Dendritic cell treated with granulocyte-macrophage colony-stimulating factor and Interleukin-4, amounts not matched to agents 40 ng/mL and 50 ng/mL, for 4 days (primary cell): ENCODE measurements at regions of chr19 and their contacts with region 1.

Region 1: DNA sequence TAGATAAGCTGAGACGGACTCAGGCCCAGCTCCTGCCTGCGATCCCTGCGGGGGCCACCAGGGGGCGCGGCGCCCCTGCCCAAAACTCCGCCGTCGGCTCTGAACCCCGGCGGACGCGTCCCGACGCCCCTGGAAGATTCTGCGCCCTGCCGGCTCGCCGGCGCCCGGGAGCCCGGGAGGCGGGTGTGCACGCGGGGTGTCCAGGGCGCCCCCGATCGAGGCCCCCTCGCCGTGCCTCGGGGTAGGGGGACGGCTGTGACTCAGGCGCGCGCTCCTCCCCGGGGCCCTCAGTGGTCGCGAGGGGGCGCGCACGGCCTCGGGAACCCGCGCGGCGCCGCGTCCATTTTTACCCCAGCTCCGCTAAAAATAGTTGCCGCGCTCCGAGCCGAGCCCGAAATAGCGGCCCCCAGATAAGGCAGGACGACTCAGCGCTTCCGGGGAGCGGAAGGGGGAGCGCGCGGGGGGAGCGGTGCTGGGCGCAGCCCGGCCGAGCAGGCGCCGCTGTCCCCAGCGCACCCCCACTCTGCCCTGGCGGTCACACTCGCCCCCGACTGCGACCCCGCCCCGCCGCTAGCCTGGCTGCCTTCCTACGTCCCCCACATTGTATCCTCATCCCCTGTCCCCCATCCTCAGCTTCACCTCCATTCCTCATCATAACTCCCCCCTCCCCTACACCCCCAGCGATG is 16.0 kb upstream of the ERCC1 start:
- H3K4me3 Mint-ChIP-seq: peak overlapping the region; percentile 71
- H3K27ac Mint-ChIP-seq: peak overlapping the region; percentile 76
- H3K4me1 Mint-ChIP-seq: peaks cover 43% of the 10 kb centered on the region
- H3K27me3 Mint-ChIP-seq: peaks cover 4% of the 10 kb centered on the region

Region 2: DNA sequence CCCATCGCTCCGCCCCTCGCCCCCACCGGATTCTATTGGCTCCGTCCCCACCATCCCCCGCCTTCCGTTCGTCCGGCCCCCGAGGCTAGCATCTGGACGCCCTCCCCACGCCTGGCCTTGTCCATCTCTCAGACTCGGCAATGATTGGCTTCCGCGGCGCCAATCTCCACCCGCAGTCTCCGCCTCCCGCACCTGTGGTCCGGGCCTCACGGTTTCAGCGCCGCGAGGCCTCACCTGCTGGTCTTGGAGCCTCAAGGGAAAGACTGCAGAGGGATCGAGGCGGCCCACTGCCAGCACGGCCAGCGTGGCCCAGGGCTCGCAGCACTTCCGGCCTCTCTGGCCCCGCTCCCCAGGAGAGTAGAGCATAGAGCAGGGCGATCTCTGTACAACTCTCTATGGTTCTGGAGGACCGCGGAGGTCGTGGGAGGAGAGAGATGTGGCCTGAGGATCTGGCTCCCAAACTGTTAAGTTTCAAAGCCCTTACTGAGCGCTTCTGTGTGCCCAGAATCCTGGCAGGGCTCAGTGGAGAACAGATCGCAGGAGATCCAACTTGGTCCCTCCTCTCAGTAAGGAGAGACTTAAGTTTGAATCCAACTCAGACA is 16.0 kb before region 1 on chr19 and contains the start of gene ERCC1:
- intact Hi-C with region 1: no loop called
- H3K4me3 Mint-ChIP-seq: peak within 1 kb of the TSS; percentile 97
- H3K27ac Mint-ChIP-seq: peak within 1 kb of the TSS; percentile 94
- H3K4me1 Mint-ChIP-seq: peaks cover 73% of the 10 kb centered on the region
- H3K27me3 Mint-ChIP-seq: peaks cover 9% of the 10 kb centered on the region

Region 3: GRCh38 chr19:45455707-45456499 is 16.2 kb after region 1 on chr19:
- intact Hi-C with region 1: loop called (anchors 2 kb)
- H3K4me3 Mint-ChIP-seq: peak overlapping the region; percentile 58
- H3K27ac Mint-ChIP-seq: peak overlapping the region; percentile 95
- H3K4me1 Mint-ChIP-seq: peaks cover 51% of the 10 kb centered on the region
- H3K27me3 Mint-ChIP-seq: peaks cover 20% of the 10 kb centered on the region

Region 4: GRCh38 chr19:45469132-45469944 is 29.6 kb after region 1 on chr19:
- intact Hi-C with region 1: loop called (anchors 2 kb)
- H3K4me3 Mint-ChIP-seq: peak overlapping the region; percentile 93
- H3K27ac Mint-ChIP-seq: peak overlapping the region; percentile 97
- H3K4me1 Mint-ChIP-seq: peaks cover 80% of the 10 kb centered on the region
- H3K27me3 Mint-ChIP-seq: peaks cover 65% of the 10 kb centered on the region

Region 5: DNA sequence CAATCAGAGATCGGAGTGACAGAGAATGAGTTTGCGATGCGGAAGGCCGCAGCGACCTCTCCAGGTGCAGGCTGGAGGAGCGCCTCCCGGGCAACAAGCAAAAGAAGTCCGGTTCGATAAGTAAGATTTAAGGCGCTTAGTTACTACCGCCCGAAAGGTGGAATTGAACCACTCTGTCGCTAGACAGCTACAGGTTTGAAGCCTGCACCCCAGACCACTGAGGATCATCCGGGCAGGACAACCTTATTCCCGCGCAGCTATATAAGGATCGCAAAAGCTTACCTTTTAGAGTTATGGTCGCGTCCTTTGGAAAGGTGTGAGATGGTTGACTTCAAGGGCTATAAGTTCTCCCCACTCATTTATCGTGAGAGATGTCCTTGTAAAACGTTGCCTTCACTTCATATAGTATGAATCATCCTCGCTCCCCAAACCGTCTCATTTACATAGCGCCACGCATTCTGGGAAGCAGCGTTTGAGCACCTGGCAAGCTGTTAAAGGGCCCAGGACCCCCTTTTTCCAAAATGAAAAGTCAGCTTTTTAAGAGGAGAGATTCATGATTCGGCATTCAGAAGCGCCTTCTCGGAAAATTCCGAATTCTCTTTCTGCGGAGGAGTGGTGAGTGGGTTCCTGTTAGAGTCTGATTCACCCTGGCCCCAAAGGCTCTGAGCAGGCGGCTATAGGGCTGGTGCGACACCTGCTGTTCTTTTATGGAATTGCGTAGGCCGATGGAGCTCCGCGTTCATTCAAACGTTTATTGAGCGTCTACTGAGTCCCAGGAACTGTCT is 38.9 kb after region 1 on chr19:
- intact Hi-C with region 1: loop called (anchors 1 kb)
- H3K4me3 Mint-ChIP-seq: peak overlapping the region; percentile 73
- H3K27ac Mint-ChIP-seq: peak overlapping the region; percentile 91
- H3K4me1 Mint-ChIP-seq: peaks cover 46% of the 10 kb centered on the region
- H3K27me3 Mint-ChIP-seq: peaks cover 48% of the 10 kb centered on the region